Heart right ventricle (tissue), 16 donors: ENCODE measurements at regions of chr7 and their contacts with region 1.

Region 1: DNA sequence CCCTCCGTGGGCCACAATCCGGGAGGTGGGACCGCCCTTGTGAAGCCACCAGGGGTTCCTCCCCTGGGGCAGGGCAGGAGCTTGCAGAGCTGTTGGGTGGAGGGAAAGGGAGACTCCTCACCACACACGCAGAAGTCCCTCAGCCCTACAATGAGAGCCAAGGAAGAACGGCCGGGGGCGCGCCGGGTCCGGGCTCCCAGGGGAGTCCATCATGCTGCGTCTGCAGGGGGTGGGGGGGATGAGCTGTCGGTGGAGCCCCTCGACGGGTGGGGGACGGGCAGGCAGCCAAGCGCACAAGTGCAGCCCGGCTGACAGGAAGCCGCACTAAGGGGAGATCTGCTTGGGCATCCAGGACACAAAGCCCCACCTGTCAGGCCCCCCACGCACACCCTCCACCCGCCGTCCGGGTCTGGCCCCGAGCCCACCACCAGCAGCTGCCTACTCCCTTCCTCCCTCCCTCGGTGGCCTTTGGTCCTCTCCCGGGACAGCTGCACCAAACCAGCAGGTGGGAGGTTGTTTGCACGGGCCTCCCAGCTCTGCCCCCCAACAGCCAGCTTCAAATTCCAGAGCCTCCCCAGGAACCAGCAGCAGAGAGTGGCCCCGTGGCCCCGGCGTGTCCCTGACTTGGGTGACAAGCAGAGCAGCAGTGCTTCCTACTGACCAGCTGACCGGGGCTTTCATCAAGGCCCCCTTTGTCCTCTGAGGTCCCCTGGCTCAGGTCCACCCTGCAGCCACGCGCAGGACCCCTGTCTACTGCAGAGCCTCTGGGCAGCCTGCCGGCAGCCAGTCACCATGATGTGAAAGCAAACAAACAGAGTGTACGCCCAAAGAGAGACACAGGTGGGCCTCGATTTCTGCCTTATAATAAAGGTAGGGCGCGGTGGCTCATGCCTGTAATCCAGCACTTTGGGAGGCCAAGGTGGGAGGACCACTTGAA is 50.3 kb downstream of the HIP1 start:
- DNase-seq: peak; percentile 13 to 39
- ATAC-seq: peak; percentile 29 to 61 (median 46)
- H3K4me3 ChIP-seq: no peak overlapping the region
- H3K27ac ChIP-seq: no peak overlapping the region
- H3K4me1 ChIP-seq: peaks cover 0 to 14% (median 10%) of the 10 kb centered on the region in 9 donors
- H3K27me3 ChIP-seq: no peaks in the 10 kb centered on the region
- CTCF ChIP-seq: no peak

Region 2: DNA sequence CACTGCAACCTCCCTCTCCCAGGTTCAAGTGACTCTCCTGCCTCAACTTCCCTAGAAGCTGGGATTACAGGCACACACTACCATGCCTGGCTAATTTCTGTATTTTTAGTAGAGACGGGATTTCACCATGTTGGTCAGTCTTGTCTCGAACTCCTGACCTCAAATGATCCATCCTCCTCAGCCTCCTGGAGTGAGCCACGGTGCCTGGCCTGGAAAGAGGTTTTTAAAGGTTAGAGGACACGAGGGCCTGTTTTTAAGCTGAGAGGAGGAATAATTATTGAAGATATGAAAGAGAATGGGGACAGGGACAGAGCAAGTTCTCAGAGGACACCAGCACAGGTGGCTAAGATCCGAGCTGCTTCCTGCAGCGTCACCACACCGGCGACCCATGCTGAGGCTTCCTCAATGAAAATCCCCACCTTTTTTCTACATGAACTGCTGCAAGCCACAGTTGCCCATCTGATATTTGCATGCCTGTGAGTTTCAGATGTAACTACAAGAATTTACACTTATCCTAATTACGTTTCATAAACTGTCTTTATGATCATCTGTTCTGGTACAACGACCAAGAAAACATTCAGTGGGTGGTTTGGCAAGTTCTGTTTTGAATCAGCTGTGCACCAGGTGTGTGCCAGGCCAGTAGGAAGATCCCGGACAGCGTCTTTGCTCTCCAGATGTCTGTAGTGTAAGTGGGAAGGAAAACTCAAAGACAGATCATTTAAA is 25.7 kb before region 1 on chr7:
- intact Hi-C with region 1: loop called in 1 of 10 experiments (anchors 1 kb)
- DNase-seq: no peak
- ATAC-seq: no peak
- H3K4me3 ChIP-seq: no peak overlapping the region
- H3K27ac ChIP-seq: no peak overlapping the region
- H3K4me1 ChIP-seq: peaks cover 0 to 6% (median 2%) of the 10 kb centered on the region in 9 donors
- H3K27me3 ChIP-seq: no peaks in the 10 kb centered on the region
- CTCF ChIP-seq: no peak

Region 3: GRCh38 chr7:76338298-76339084 is 650.0 kb after region 1 on chr7:
- intact Hi-C with region 1: loop called in 1 of 10 experiments (anchors 5 kb)
- DNase-seq: no peak
- ATAC-seq: no peak
- H3K4me3 ChIP-seq: no peak overlapping the region
- H3K27ac ChIP-seq: peak overlapping the region in 7 of 10 donors; percentile 1 to 84 (median 50)
- H3K4me1 ChIP-seq: peaks cover 0 to 98% (median 83%) of the 10 kb centered on the region in 9 donors
- H3K27me3 ChIP-seq: no peaks in the 10 kb centered on the region
- CTCF ChIP-seq: no peak